ENCODE measurements at regions of chr9 and their contacts with region 1.

Region 1: DNA sequence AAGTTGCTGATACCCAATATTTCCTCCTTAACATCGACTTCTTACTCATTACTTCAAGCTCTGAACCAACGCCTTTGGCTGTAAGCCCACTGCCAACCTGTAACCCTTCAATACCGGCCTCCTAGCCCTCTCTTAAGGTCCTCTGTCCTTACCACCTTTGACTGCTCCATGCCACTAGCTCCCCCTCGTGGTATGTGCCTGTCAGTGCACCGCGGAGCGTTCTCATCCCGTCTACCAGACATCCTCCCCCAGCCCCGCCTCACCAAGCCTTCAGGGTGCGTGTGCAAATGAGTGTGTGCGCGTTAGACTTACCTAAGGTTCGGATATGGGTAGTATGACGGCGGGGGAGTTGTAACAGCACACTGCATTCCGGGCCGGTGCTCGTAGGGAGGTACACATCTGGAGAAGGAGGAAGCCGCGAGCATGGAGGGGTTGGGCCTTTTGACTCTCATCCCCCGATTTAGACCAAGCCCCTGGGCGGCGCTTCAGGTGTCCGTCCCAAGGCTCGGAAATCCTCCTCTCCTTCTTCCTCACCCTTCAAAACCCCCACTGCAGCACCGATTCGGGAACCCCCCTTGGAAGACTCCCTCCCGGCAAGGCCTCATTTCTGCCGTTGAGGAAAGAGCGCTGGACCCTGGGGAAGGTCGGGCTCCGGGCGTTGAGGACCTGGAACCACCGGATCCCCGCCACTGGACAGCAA is 2.8 kb upstream of the MYORG start:
- DNase-seq: peak; percentile 96
- H3K4me3 ChIP-seq: peak overlapping the region in 7 of 8 donors; percentile 22 to 79 (median 54)
- H3K27ac ChIP-seq: peak overlapping the region in 3 of 8 donors; percentile 48 to 63 (median 61)
- H3K4me1 ChIP-seq: peaks cover 29 to 61% (median 48%) of the 10 kb centered on the region in 6 donors
- H3K27me3 ChIP-seq: peaks cover 0 to 18% (median 0%) of the 10 kb centered on the region in 7 donors
- CTCF ChIP-seq: peak; percentile 94 to 98 (median 97)
- POLR2A ChIP-seq: no peak

Region 2: GRCh38 chr9:34252670-34253459 is 126.6 kb before region 1 on chr9:
- intact Hi-C with region 1: loop called (anchors 10 kb)
- DNase-seq: peak; percentile 84
- H3K4me3 ChIP-seq: no peak overlapping the region
- H3K27ac ChIP-seq: peak overlapping the region in 1 of 8 donors; percentile 21
- H3K4me1 ChIP-seq: peaks cover 0 to 15% (median 6%) of the 10 kb centered on the region in 6 donors
- H3K27me3 ChIP-seq: no peaks in the 10 kb centered on the region
- CTCF ChIP-seq: peak; percentile 5 to 96 (median 75)
- POLR2A ChIP-seq: no peak

Region 3: GRCh38 chr9:34332076-34332964 is 47.2 kb before region 1 on chr9:
- intact Hi-C with region 1: loop called (anchors 5 kb)
- DNase-seq: no peak
- H3K4me3 ChIP-seq: no peak overlapping the region
- H3K27ac ChIP-seq: no peak overlapping the region
- H3K4me1 ChIP-seq: peaks cover 7 to 47% (median 27%) of the 10 kb centered on the region in 6 donors
- H3K27me3 ChIP-seq: no peaks in the 10 kb centered on the region
- CTCF ChIP-seq: peak in 8 of 11 experiments; percentile 34 to 55 (median 44)
- POLR2A ChIP-seq: no peak

Region 4: GRCh38 chr9:34603610-34604231 is 224.2 kb after region 1 on chr9:
- intact Hi-C with region 1: no loop called
- DNase-seq: peak; percentile 91
- H3K4me3 ChIP-seq: no peak overlapping the region
- H3K27ac ChIP-seq: no peak overlapping the region
- H3K4me1 ChIP-seq: peaks cover 0 to 20% (median 3%) of the 10 kb centered on the region in 6 donors
- H3K27me3 ChIP-seq: no peaks in the 10 kb centered on the region
- CTCF ChIP-seq: peak; percentile 85 to 95 (median 89)
- POLR2A ChIP-seq: no peak

Measured in spleen (tissue), 13 donors.